AG04450 (cell line): ENCODE measurements at regions of chr22 and their contacts with region 1.

Region 1: GRCh38 chr22:20568989-20569769 is 61.8 kb downstream of the MED15 start:
- DNase-seq: peak; percentile 94
- H3K4me3 ChIP-seq: no peak overlapping the region
- H3K27ac ChIP-seq: peak overlapping the region; percentile 97
- H3K27me3 ChIP-seq: no peaks in the 10 kb centered on the region
- CTCF ChIP-seq: no peak

Region 2: DNA sequence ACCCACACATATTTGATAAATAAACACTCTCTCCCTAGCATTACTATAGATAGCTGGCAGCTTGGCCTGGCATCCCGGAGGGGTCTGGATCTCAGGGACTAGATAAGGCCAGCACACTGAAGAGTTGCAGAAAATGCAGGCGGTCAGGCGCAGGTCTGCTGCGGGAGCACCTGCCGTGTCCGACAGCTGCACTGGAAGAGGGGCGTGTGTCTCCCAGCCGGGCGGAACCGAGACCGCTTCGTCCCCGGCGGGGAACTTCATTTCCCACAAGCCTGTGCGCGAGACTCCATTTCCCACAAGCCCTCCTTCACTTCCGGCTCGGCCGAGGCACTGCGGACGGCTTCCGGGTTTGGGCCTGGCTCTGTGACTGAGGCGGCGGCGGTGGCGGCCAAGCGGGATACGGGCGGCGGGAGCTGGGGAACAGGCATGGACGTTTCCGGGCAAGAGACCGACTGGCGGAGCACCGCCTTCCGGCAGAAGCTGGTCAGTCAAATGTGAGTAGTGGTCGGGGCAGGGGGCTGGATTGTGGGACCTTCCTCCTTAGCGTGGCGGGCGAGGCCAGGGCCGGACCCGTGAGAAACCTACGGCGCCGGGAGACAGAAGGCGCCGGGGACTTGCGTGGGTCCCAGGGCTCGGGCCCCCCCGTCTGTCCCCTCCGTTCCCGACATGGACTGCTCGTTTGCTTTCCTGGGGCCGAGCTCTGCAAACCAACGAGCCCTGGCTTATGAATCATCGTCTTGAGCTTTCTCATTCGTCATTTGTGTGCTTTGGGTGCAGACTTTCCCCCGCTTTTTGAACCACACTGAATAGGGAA is 61.7 kb before region 1 on chr22 and contains the start of gene MED15:
- CTCF ChIA-PET with region 1: interaction called, 11 read pairs
- POLR2A ChIA-PET with region 1: interaction called, 14 read pairs
- DNase-seq: peak; percentile 65
- H3K4me3 ChIP-seq: peak within 1 kb of the TSS; percentile 97
- H3K27ac ChIP-seq: peak within 1 kb of the TSS; percentile 97
- H3K27me3 ChIP-seq: no peaks in the 10 kb centered on the region
- CTCF ChIP-seq: no peak
- polyA plus RNA-seq, gene MED15: 17.3 and 25.4 TPM in 2 replicates

Region 3: DNA sequence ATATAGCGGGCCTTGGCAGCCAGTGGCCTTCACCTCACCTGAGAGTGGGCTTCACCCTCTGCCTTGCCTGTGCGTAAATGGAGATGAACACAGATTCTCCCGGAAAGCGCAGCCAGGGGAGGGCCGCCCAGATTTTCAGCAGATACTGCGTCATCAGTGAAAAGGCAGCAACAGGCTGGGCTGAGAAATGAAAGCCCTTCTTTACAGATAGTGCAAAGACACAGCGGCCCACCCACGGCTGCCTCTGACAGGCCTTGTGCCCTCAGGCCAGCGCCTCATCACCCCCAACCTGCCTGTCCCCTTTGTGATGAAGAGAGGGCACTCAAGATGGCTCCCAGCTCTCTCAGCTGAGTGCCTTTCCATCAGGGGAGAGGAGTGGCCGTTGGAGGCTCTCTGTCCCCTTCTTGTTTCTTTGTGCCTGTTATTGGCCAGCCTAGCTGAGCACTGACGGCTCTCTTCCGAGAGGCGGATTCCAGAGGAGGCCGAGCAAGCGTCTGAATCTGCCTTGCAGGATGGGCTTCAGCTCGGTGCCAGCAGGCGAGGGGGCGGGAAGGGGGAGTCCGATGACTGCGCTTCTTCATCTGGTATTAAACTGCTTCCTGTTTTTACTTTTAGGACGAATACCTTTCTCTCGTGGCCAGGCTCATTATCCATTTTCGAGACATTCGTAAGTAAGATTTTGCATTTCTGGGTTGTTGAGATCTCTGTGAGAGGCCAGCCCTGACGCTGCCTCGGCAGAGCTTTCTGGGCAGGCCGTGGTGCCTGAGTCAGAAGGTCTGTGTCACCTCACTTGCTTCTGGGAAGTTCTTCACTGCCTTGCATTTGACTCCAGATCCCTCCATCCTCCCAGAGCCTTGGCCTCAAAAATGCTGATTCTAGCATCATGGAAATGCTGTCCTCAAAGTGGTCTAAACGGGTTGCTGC is 18.1 kb before region 1 on chr22:
- CTCF ChIA-PET with region 1: interaction called, 82 read pairs
- POLR2A ChIA-PET with region 1: interaction called, 11 read pairs
- DNase-seq: no peak
- H3K4me3 ChIP-seq: no peak overlapping the region
- H3K27ac ChIP-seq: peak overlapping the region; percentile 97
- H3K27me3 ChIP-seq: no peaks in the 10 kb centered on the region
- CTCF ChIP-seq: no peak

Region 4: DNA sequence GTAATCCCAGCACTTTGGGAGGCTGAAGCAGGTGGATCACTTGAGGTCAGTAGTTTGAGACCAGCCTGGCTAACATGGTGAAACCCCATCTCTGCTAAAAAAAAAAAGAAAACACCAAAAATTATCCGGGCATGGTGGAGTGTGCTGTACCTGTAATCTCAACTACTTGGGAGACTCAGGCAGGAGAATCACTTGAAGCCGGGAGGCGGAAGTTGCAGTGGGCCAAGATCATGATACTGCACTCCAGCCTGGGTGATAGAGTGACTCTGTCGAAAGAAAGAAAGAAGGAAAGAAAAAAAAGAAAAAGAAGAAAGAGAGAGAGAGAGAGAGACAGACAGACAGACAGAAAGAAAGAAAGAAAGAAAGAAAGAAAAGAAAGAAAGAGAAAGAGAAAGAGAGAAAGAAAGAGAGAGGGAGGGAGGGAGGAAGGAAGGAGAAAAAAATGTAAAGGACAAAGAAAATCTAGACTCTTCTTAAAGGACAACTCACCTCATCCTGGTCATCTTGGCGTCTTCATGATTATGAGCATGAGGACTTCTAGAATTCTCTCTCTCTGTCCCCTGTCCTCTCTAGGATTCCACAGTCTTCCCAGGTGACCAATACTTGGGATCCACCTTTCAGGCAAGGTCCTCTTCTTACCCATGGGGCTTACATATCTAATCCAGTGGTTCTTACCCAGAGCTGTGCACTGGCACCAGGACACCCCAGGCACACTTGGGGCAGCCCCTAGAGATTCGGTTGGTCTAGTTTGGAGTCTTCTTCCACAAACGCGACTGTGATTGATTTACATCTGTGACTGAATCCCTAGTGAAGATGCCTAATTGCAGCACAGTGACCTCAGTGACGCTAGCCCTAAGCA is 59.1 kb after region 1 on chr22:
- CTCF ChIA-PET with region 1: interaction called, 11 read pairs
- POLR2A ChIA-PET with region 1: no interaction called
- DNase-seq: no peak
- H3K4me3 ChIP-seq: no peak overlapping the region
- H3K27ac ChIP-seq: no peak overlapping the region
- H3K27me3 ChIP-seq: peaks cover 19% of the 10 kb centered on the region
- CTCF ChIP-seq: no peak

Region 5: GRCh38 chr22:20840646-20841371 is 271.6 kb after region 1 on chr22:
- CTCF ChIA-PET with region 1: no interaction called
- POLR2A ChIA-PET with region 1: no interaction called
- DNase-seq: no peak
- H3K4me3 ChIP-seq: no peak overlapping the region
- H3K27ac ChIP-seq: no peak overlapping the region
- H3K27me3 ChIP-seq: no peaks in the 10 kb centered on the region
- CTCF ChIP-seq: no peak